CD4-positive, alpha-beta memory T cell (primary cell): ENCODE measurements at regions of chr17 and their contacts with region 1.

Region 1: DNA sequence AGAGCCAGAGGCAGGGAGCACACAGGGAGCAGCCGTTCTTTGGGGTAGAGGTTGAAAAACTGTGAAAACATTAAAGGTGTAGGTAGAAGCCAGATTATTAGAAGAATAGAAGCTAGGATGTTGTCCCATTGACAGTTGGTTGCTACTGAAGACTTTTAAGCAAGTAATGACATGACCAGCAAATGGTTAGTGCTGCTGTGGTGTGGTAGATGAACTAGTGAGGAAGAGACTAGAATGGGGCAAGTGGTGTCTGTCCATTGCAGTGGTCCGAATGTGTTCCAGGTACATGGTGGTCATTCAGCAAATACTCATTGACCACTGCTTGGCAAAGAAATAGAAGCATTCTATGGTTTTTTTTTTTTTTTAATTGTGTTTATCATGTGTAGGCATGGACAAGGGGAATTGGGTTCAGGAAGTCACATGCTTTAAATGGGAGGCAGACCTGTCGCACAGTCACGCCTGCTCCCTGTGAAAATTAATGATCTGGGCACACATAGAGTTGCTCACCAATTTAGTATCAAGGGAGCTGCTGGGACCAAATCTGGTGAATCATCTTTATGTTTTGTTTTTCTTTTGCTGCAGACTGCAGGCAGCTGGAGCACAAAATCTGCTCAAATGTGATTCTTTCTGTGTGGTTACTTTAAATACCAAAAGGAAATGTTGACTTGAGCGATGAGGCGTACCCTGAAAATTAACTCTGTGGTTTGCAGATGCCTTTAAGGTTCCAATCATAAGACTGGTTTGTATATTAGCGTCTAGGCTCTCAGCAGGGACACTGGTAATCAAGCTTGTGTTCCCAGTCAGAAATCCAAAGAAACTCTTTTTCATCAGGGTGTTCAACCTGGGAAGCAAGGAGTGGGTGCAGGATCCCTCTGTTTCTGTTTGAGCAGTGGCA is 30.7 kb downstream of the YPEL2 start:
- DNase-seq: peak; percentile 49 to 62 (median 59)
- H3K4me3 ChIP-seq: peak overlapping the region in 1 of 2 donors; percentile 21
- H3K4me3 Mint-ChIP-seq: peak overlapping the region; percentile 70 to 92 (median 81)
- H3K27ac ChIP-seq: peak overlapping the region; percentile 35
- H3K27ac Mint-ChIP-seq: peak overlapping the region; percentile 85 to 96 (median 86)
- H3K4me1 ChIP-seq: peaks cover 83% of the 10 kb centered on the region
- H3K4me1 Mint-ChIP-seq: peaks cover 57 to 89% (median 80%) of the 10 kb centered on the region in 4 donors
- H3K27me3 ChIP-seq: no peaks in the 10 kb centered on the region
- H3K27me3 Mint-ChIP-seq: no peaks in the 10 kb centered on the region

Region 2: GRCh38 chr17:59372138-59372857 is 10.1 kb after region 1 on chr17:
- CTCF ChIA-PET with region 1: interaction called, 10 read pairs
- POLR2A ChIA-PET with region 1: interaction called, 34 read pairs
- intact Hi-C with region 1: no loop called
- DNase-seq: no peak
- H3K4me3 ChIP-seq: no peak overlapping the region
- H3K4me3 Mint-ChIP-seq: peak overlapping the region in 7 of 8 donors; percentile 20 to 65 (median 23)
- H3K27ac ChIP-seq: no peak overlapping the region
- H3K27ac Mint-ChIP-seq: peak overlapping the region; percentile 56 to 82 (median 69)
- H3K4me1 ChIP-seq: peaks cover 78% of the 10 kb centered on the region
- H3K4me1 Mint-ChIP-seq: peaks cover 54 to 82% (median 72%) of the 10 kb centered on the region in 4 donors
- H3K27me3 ChIP-seq: no peaks in the 10 kb centered on the region
- H3K27me3 Mint-ChIP-seq: no peaks in the 10 kb centered on the region